ENCODE measurements at regions of chr4 and their contacts with region 1.

Region 1: GRCh38 chr4:41661442-41662076 is 87.0 kb downstream of the PHOX2B start:
- DNase-seq: peak; percentile 56 to 60
- ATAC-seq: peak in 6 of 8 donors; percentile 40 to 65 (median 48)
- H3K4me3 ChIP-seq: no peak overlapping the region
- H3K27ac ChIP-seq: peak overlapping the region in 1 of 10 donors; percentile 49
- H3K4me1 ChIP-seq: peaks cover 3 to 25% (median 9%) of the 10 kb centered on the region in 9 donors
- H3K27me3 ChIP-seq: no peaks in the 10 kb centered on the region
- CTCF ChIP-seq: peak in 8 of 9 donors; percentile 90 to 97 (median 96)

Region 2: GRCh38 chr4:40908702-40909362 is 752.7 kb before region 1 on chr4:
- intact Hi-C with region 1: loop called in 1 of 10 experiments (anchors 10 kb)
- DNase-seq: peak; percentile 48 to 57
- ATAC-seq: peak; percentile 56 to 93 (median 81)
- H3K4me3 ChIP-seq: no peak overlapping the region
- H3K27ac ChIP-seq: peak overlapping the region in 4 of 10 donors; percentile 3 to 63 (median 36)
- H3K4me1 ChIP-seq: peaks cover 0 to 27% (median 13%) of the 10 kb centered on the region in 9 donors
- H3K27me3 ChIP-seq: no peaks in the 10 kb centered on the region
- CTCF ChIP-seq: peak; percentile 76 to 97 (median 87)

Region 3: DNA sequence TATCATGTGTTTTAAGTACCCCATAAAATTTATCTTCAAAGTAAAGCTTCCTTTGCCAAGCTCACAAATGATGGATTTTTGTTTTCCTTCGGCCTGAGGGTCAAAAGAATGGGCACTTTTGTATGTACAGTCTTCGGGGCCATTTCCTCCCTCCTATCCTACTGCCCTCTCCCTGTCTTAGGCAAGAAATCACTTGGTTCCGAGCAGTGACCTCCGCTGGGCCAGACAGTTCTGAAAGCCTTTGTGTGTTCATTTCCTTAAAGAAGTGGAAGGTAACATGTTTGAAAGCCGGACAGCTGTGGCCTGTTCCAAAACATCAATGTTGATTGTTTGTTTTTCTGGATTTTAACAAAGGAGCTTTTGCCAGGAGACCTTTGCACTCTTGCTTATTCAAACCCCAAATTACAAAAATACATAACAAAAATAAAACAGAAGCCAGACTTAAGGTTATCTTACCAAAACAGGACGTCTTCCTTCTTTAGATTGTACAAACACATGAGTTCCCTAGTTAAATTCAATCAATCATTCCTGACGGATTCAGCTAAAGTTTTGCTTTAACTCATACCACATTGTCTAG is 234.2 kb before region 1 on chr4:
- intact Hi-C with region 1: loop called in 1 of 10 experiments (anchors 5 kb)
- DNase-seq: no peak
- ATAC-seq: peak in 6 of 8 donors; percentile 46 to 72 (median 60)
- H3K4me3 ChIP-seq: no peak overlapping the region
- H3K27ac ChIP-seq: peak overlapping the region; percentile 15 to 89 (median 69)
- H3K4me1 ChIP-seq: peaks cover 4 to 92% (median 80%) of the 10 kb centered on the region in 9 donors
- H3K27me3 ChIP-seq: no peaks in the 10 kb centered on the region
- CTCF ChIP-seq: no peak

Region 4: DNA sequence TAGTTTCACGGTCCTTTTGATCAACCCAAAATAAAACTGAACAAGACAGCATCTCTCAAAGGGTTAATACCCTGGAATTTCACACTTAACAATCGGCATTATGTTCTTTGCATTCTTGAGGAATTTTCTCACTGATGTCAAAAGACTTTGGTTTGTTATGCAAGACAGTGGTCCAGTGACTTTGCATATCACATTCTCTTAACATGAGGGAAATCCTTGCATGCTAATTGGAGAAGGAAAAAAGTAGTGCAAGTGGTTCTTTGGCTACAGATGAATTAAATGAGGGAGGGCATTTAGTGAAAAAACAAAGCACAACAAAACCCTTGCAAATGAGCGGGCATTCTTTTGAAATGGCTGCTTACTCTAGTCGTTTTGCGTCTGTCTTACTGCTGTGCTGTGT is 228.7 kb before region 1 on chr4:
- intact Hi-C with region 1: loop called in 2 of 10 experiments (anchors 5 kb)
- DNase-seq: no peak
- ATAC-seq: no peak
- H3K4me3 ChIP-seq: no peak overlapping the region
- H3K27ac ChIP-seq: peak overlapping the region in 5 of 10 donors; percentile 26 to 89 (median 69)
- H3K4me1 ChIP-seq: peaks cover 8 to 95% (median 78%) of the 10 kb centered on the region in 9 donors
- H3K27me3 ChIP-seq: no peaks in the 10 kb centered on the region
- CTCF ChIP-seq: no peak